A673 (cell line): ENCODE measurements at regions of chr11 and their contacts with region 1.

Region 1: GRCh38 chr11:86919557-86920210 is 35.5 kb downstream of the FZD4 start:
- DNase-seq: peak; percentile 90
- H3K4me3 ChIP-seq: no peak overlapping the region
- H3K27ac ChIP-seq: peak overlapping the region; percentile 87
- H3K4me1 ChIP-seq: peaks cover 63% of the 10 kb centered on the region
- H3K27me3 ChIP-seq: no peaks in the 10 kb centered on the region
- CTCF ChIP-seq: peak; percentile 88

Region 2: DNA sequence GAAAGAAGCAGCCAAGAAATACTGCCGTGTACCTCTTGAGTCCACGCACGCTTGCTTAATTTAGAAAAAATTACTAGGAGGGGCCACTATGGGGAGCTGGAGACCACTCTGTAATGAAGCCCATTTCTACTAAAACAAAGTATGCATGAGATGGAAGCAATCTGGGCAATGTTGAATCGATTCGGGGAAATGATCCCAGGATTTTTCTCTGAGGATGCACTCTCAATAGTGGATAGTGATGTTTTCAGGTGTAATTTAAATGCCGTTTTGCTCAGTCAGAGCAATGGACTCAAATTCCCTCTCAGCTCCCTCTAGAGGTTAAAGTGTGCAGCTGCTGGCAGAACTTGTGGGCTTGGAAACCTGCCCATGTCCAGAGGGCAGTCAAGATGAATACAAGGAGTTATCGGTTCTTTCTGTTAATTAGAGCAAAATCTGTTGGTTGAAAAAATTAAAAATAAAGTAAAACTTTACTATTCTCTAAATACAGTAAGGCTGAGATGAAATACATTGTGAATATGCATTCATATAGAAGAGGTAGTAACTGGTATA is 311.4 kb before region 1 on chr11:
- CTCF ChIA-PET with region 1: no interaction called
- POLR2A ChIA-PET with region 1: no interaction called
- intact Hi-C with region 1: loop called (anchors 1 kb)
- DNase-seq: peak; percentile 82
- H3K4me3 ChIP-seq: no peak overlapping the region
- H3K27ac ChIP-seq: no peak overlapping the region
- H3K4me1 ChIP-seq: peaks cover 5% of the 10 kb centered on the region
- H3K27me3 ChIP-seq: no peaks in the 10 kb centered on the region
- CTCF ChIP-seq: peak; percentile 100

Region 3: DNA sequence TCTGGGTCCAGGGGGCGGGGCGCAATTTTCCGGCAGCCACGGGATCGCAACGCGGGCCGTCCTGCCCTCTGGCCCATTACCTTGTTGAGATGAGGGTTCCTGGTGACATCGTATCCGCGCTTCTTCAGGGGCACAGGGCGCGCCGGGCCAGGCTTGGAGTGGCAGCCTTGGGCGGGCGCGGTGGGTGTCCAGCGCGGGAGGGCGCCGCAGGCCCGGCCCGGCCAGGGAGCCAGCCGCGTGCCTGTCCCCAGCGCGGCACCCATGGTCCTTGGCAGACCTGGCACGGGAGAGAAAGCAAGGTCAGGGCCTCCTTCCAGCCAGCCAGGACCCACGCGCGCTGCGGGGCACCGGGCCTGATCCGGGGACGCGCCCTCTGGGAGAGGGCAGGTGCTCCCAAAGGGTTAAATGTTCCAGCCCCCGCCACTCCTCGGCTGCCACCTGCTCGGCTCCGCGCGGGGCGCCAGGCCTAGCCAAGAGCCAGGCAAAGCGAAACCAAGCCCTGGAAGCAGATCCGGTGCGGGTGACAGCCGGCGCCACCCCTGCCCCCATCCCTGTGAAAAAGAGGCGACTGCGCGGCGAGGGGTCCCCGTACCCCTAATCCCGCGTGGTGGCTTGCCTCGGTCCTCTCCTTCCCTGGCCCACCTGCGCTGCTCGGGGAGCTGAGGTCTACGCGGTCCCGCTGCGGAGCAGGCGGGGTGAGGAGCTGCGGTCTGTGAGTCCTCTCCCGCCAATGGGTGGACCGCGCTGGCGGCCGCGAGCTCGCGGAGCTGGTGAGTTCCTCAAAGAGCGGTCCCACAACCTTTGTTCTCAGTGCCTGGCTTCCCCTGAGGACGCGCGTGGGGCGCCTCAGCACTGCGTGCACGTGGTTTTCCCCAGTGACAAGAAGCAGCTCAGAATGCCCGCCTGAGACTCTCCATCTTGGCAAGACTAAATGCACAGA is 247.7 kb before region 1 on chr11 and contains the start of gene ME3:
- CTCF ChIA-PET with region 1: no interaction called
- POLR2A ChIA-PET with region 1: no interaction called
- intact Hi-C with region 1: loop called (anchors 5 kb)
- DNase-seq: peak; percentile 66
- H3K4me3 ChIP-seq: peak within 1 kb of the TSS; percentile 55
- H3K27ac ChIP-seq: peak within 1 kb of the TSS; percentile 53
- H3K4me1 ChIP-seq: peaks cover 23% of the 10 kb centered on the region
- H3K27me3 ChIP-seq: no peaks in the 10 kb centered on the region
- CTCF ChIP-seq: no peak
- total RNA-seq, gene ME3: 6.9 and 7.6 TPM in 2 replicates

Region 4: GRCh38 chr11:86869966-86870570 is 49.6 kb before region 1 on chr11:
- CTCF ChIA-PET with region 1: interaction called, 3 read pairs
- POLR2A ChIA-PET with region 1: no interaction called
- intact Hi-C with region 1: loop called (anchors 1 kb)
- DNase-seq: peak; percentile 87
- H3K4me3 ChIP-seq: no peak overlapping the region
- H3K27ac ChIP-seq: no peak overlapping the region
- H3K4me1 ChIP-seq: peaks cover 23% of the 10 kb centered on the region
- H3K27me3 ChIP-seq: no peaks in the 10 kb centered on the region
- CTCF ChIP-seq: peak; percentile 95